H1 (cell line): ENCODE measurements at regions of chr1 and their contacts with region 1.

Region 1: DNA sequence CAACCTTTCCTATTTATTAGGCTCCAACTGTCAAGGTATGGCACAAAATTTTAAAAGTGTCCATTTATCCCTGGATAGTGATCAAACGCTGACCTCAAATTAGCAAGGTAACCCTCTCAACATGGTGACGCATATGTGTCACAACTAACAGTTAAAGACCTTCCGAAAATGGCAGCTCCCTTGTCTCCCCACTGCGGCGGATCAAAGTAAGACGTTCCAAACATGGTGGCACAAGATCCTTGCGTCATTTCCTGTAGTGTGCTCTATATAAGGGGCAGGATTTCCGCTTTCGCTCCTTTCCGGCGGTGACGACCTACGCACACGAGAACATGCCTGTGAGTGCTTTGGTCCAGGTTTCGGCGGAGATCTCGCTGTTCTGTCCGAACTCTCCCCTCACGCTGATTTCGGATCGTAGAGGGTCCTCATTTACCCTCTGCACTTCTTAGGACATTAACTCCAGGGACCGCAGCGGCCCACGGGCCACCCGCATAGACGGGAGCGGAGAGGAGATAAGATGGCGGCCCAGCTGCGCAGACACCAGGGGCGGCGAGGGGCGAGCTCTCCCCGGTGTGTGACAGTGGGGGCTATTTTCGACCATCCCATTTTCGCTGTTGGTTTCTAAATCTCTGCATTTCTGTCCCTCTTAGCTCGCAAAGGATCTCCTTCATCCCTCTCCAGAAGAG is at the start of gene RPS27:
- DNase-seq: peak; percentile 86 to 93
- H3K4me3 ChIP-seq: peak within 1 kb of the TSS; percentile 78 to 95 (median 87)
- H3K27ac ChIP-seq: peak within 1 kb of the TSS; percentile 95
- H3K4me1 ChIP-seq: peaks cover 0 to 8% (median 3%) of the 10 kb centered on the region in 4 experiments; a peak in 4 of 7 replicates
- H3K27me3 ChIP-seq: no peaks in the 10 kb centered on the region
- CTCF ChIP-seq: no peak
- EP300 ChIP-seq: no peak
- POLR2A ChIP-seq: peak; percentile 100
- RAD21 ChIP-seq: no peak
- total RNA-seq, gene RPS27: 1,810 and 1,941 TPM in 2 replicates

Region 2: GRCh38 chr1:153742411-153743142 is 248.0 kb before region 1 on chr1:
- CTCF ChIA-PET with region 1: no interaction called
- POLR2A ChIA-PET with region 1: interaction called, 15 read pairs
- DNase-seq: no peak
- H3K4me3 ChIP-seq: no peak overlapping the region
- H3K27ac ChIP-seq: no peak overlapping the region
- H3K4me1 ChIP-seq: peaks cover 6 to 46% (median 17%) of the 10 kb centered on the region in 4 experiments; a peak in 6 of 7 replicates
- H3K27me3 ChIP-seq: peaks cover 0 to 2% (median 0%) of the 10 kb centered on the region in 4 experiments; a peak in 1 of 7 replicates
- CTCF ChIP-seq: no peak
- EP300 ChIP-seq: no peak
- POLR2A ChIP-seq: no peak
- RAD21 ChIP-seq: no peak

Region 3: DNA sequence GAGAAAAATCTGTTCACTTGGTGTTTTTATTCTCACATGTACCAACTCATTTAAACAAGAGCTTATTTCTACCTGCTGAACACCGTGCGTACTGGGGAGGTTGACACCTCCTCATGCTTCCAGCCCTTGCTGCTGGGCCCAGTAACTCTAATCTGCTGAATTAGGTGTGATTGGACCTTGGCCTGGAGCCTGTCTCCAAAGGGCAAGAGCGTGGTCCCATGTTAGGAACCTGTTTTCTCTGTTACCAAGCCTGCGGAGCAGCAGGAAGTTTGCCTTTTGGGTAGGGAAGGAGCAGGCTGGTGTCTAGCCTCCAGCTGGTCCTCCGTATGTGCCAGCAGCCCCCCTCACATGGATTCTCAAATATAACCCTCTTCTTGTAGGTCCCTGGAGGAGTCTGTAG is 226.3 kb before region 1 on chr1:
- CTCF ChIA-PET with region 1: no interaction called
- POLR2A ChIA-PET with region 1: no interaction called
- DNase-seq: no peak
- H3K4me3 ChIP-seq: no peak overlapping the region
- H3K27ac ChIP-seq: no peak overlapping the region
- H3K4me1 ChIP-seq: no peaks in the 10 kb centered on the region
- H3K27me3 ChIP-seq: no peaks in the 10 kb centered on the region
- CTCF ChIP-seq: no peak
- EP300 ChIP-seq: no peak
- POLR2A ChIP-seq: no peak
- RAD21 ChIP-seq: no peak

Region 4: DNA sequence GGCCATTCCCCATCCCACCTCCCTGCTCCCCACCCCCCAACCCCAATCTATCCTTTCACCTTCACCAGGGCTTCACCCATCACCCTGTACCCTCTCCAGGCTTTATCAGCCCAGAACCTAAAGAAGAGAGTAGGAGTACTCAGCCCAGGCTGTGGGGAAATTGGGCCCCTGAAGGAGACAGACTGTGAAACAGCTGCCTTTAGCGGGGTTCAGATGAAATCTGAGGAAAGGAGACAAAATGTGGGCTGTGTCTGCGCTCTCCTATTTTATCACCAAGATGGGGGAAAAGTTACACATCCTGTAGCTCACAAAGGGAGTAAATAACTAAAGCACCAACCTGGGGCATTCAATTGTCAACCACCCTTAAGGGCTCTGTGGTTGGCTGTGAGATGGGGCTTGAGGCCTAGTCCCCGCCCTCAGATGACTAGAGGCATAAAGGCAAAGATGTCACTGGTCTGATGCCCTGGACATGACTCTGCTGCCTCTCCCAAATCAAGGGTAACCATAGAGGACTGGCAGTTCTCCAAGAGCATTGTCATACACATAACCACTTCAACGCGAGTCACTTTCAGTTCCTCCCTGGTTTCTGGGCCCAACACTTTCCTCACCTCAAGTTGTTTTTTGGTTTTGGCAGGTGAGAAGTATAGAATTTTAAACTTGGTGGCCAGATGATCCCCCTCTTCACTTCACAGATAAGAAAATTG is 185.4 kb before region 1 on chr1:
- CTCF ChIA-PET with region 1: interaction called, 6 read pairs
- POLR2A ChIA-PET with region 1: interaction called, 153 read pairs
- DNase-seq: no peak
- H3K4me3 ChIP-seq: no peak overlapping the region
- H3K27ac ChIP-seq: no peak overlapping the region
- H3K4me1 ChIP-seq: no peaks in the 10 kb centered on the region
- H3K27me3 ChIP-seq: no peaks in the 10 kb centered on the region
- CTCF ChIP-seq: no peak
- EP300 ChIP-seq: no peak
- POLR2A ChIP-seq: no peak
- RAD21 ChIP-seq: no peak

Region 5: GRCh38 chr1:153936011-153936802 is 54.4 kb before region 1 on chr1:
- CTCF ChIA-PET with region 1: interaction called, 11 read pairs
- POLR2A ChIA-PET with region 1: interaction called, 18 read pairs
- DNase-seq: no peak
- H3K4me3 ChIP-seq: no peak overlapping the region
- H3K27ac ChIP-seq: no peak overlapping the region
- H3K4me1 ChIP-seq: no peaks in the 10 kb centered on the region
- H3K27me3 ChIP-seq: no peaks in the 10 kb centered on the region
- CTCF ChIP-seq: no peak
- EP300 ChIP-seq: no peak
- POLR2A ChIP-seq: no peak
- RAD21 ChIP-seq: no peak

Region 6: GRCh38 chr1:153977250-153978240 is 13.1 kb before region 1 on chr1 and contains the start of gene JTB:
- CTCF ChIA-PET with region 1: interaction called, 14 read pairs
- POLR2A ChIA-PET with region 1: interaction called, 276 read pairs
- DNase-seq: peak in 1 of 2 experiments; percentile 88
- H3K4me3 ChIP-seq: peak within 1 kb of the TSS; percentile 91 to 99 (median 93)
- H3K27ac ChIP-seq: peak within 1 kb of the TSS; percentile 66
- H3K4me1 ChIP-seq: no peaks in the 10 kb centered on the region; a peak in 1 of 7 replicates
- H3K27me3 ChIP-seq: no peaks in the 10 kb centered on the region
- CTCF ChIP-seq: no peak
- EP300 ChIP-seq: no peak
- POLR2A ChIP-seq: peak; percentile 76 to 78
- RAD21 ChIP-seq: no peak
- total RNA-seq, gene JTB: 91.1 and 93.0 TPM in 2 replicates

Region 7: DNA sequence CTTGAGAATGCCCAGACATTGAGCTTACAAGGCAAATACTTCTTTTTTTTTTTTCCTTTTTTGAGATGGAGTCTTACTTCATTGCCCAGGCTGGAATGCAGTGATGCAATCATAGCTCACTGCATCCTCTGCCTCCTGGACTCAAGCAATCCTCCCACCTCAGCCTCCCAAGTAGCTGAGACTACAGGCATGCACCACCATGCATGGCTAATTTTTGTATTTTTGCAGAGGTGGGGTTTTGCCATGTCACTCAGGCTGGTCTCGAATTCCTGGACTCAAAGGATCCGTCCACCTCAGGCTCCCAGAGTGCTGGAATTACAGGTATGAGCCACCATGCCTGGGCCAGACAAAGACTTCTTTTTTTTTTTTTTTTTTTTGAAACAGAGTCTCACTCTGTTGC is 85.1 kb after region 1 on chr1:
- CTCF ChIA-PET with region 1: no interaction called
- POLR2A ChIA-PET with region 1: interaction called, 11 read pairs
- DNase-seq: no peak
- H3K4me3 ChIP-seq: no peak overlapping the region
- H3K27ac ChIP-seq: no peak overlapping the region
- H3K4me1 ChIP-seq: no peaks in the 10 kb centered on the region
- H3K27me3 ChIP-seq: no peaks in the 10 kb centered on the region
- CTCF ChIP-seq: no peak
- EP300 ChIP-seq: no peak
- POLR2A ChIP-seq: no peak
- RAD21 ChIP-seq: no peak

Region 8: DNA sequence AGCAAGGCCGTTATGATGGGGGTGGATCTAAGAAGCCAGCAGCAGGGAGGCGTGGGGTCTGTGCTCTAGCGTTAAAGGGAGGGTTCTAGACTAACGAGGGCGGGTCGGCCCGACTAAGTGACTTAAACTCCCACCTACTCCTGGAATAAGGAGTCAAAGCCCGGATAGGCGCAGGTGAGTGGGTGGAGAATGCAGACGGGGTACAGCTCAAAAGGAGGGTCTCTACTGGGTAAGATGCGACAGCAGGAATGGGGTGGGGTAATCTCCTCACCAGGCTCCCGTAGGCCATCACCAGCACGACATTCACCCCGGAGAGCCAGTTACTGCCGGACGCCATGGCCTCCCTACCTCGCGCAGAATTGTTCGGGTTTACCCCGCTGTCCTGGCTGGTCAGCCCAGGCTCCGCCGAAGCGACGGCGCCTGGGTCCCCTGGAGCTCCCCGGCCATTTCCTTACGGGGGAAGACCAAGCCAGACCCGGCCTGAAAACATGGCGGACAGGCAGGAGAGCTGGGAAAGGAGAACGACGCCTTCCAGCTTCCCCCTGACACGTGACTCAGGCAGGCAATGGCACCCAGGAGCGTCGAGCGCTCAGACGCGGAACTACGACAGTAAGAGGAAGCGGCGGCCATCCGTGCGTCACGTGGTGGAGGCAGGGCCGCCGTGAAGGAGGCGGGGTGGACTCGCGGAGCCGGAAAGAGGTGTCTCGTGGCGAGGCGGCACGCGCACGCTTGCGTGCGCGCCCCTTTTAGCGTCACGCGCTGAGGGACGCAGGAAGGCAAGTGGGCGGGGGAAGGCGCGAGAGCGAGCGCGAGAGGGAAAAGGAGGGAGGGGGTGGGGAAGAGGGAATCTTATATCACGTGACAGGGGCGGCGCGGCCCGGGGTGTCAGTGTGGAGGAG is 229.7 kb after region 1 on chr1 and contains the start of gene UBAP2L:
- CTCF ChIA-PET with region 1: no interaction called
- POLR2A ChIA-PET with region 1: interaction called, 14 read pairs
- DNase-seq: peak; percentile 96 to 99
- H3K4me3 ChIP-seq: peak within 1 kb of the TSS; percentile 83 to 96 (median 90)
- H3K27ac ChIP-seq: peak within 1 kb of the TSS; percentile 99
- H3K4me1 ChIP-seq: peaks cover 2 to 11% (median 3%) of the 10 kb centered on the region in 4 experiments; a peak in 5 of 7 replicates
- H3K27me3 ChIP-seq: no peaks in the 10 kb centered on the region
- CTCF ChIP-seq: no peak
- EP300 ChIP-seq: no peak
- POLR2A ChIP-seq: peak; percentile 90 to 97
- RAD21 ChIP-seq: no peak
- total RNA-seq, gene UBAP2L: 253 and 254 TPM in 2 replicates